Thyroid gland (tissue), 4 donors: ENCODE measurements at regions of chr16 and their contacts with region 1.

Region 1: DNA sequence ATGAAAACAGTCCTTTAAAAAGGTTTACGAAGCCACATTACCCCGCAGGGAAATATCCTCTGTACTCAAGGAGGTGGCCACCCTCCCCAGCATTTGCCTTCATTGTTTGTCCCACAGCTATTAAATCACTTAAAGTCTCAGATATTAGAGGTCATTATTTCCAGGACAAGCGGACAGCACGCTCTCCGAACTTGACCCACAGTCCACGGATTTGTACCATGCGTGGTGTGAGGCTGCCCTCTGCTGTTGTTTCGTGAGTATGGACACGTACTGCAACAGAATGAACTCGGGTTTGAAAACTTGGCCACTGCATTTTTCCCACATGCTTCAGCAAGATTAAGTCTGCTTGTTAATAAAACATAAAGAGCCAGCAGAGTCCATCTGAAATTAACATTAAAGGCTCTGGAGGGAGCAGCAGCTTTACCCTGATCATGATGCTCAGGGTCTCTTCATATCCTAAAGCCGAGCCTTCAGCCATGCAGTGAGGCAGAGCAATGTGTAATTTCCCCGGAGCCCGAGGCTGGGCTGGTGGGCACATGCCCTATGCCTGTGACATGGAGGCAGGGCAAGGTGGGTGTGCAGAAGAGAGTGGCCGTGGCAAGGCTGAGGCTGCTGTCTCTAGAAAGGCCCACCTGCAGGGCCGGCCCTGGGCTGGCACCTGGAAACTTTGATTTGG is 19.7 kb downstream of the MEAK7 start:
- DNase-seq: peak; percentile 67 to 76
- H3K4me3 ChIP-seq: no peak overlapping the region
- H3K27ac ChIP-seq: no peak overlapping the region
- H3K4me1 ChIP-seq: no peaks in the 10 kb centered on the region
- H3K27me3 ChIP-seq: no peaks in the 10 kb centered on the region
- CTCF ChIP-seq: peak; percentile 34 to 92 (median 80)
- POLR2A ChIP-seq: no peak

Region 2: GRCh38 chr16:84084570-84085270 is 400.0 kb before region 1 on chr16:
- intact Hi-C with region 1: loop called (anchors 10 kb)
- DNase-seq: peak; percentile 72 to 79
- H3K4me3 ChIP-seq: no peak overlapping the region
- H3K27ac ChIP-seq: no peak overlapping the region
- H3K4me1 ChIP-seq: no peaks in the 10 kb centered on the region
- H3K27me3 ChIP-seq: no peaks in the 10 kb centered on the region
- CTCF ChIP-seq: peak in 5 of 6 experiments; percentile 67 to 87 (median 78)
- POLR2A ChIP-seq: no peak

Region 3: DNA sequence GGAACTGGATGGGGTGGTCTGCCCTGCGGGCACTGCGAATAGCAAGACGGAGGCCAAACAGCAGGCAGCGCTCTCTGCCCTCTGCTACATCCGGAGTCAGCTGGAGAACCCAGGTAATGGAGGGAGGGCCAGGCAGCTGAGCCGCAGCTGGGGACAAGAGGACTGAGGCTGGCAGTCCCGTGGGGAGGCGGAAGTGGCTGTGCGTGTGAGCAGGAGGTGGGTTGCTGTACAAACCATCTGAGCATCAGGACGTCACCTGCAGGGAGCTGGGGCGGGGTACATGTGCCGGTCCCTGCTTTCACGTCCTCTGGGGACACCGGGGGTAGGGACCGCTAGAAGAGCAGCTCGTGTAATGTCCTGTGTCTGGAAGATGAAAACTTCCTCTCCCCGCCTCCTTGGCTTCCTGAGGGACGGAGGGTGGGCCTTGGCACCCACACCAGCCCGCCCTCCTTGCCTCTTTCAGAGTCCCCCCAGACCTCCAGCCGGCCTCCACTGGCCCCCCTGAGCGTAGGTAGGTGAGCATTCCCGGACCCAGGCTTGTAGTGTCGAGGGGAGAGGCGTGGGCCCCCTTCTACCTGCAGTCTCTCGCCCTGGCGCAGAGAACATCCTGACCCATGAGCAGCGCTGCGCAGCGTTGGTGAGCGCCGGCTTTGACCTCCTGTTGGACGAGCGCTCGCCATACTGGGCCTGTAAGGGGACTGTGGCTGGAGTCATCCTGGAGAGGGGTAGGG is 290.1 kb before region 1 on chr16:
- intact Hi-C with region 1: loop called (anchors 10 kb)
- DNase-seq: no peak
- H3K4me3 ChIP-seq: no peak overlapping the region
- H3K27ac ChIP-seq: no peak overlapping the region
- H3K4me1 ChIP-seq: no peaks in the 10 kb centered on the region
- H3K27me3 ChIP-seq: no peaks in the 10 kb centered on the region
- CTCF ChIP-seq: no peak
- POLR2A ChIP-seq: no peak

Region 4: GRCh38 chr16:84277237-84277823 is 207.4 kb before region 1 on chr16:
- intact Hi-C with region 1: loop called (anchors 2 kb)
- DNase-seq: peak; percentile 68 to 72
- H3K4me3 ChIP-seq: no peak overlapping the region
- H3K27ac ChIP-seq: no peak overlapping the region
- H3K4me1 ChIP-seq: no peaks in the 10 kb centered on the region
- H3K27me3 ChIP-seq: no peaks in the 10 kb centered on the region
- CTCF ChIP-seq: peak; percentile 68 to 88 (median 81)
- POLR2A ChIP-seq: no peak